ENCODE measurements at regions of chr7 and their contacts with region 1.

Region 1: GRCh38 chr7:149147072-149147751 is at the start of gene ZNF398:
- DNase-seq: peak; percentile 74
- H3K4me3 Mint-ChIP-seq: peak within 1 kb of the TSS; percentile 89
- H3K27ac Mint-ChIP-seq: peak within 1 kb of the TSS; percentile 91
- H3K4me1 Mint-ChIP-seq: peaks cover 42% of the 10 kb centered on the region
- H3K27me3 Mint-ChIP-seq: no peaks in the 10 kb centered on the region
- total RNA-seq, gene ZNF398: 14.1 and 14.4 TPM in 2 replicates

Region 2: DNA sequence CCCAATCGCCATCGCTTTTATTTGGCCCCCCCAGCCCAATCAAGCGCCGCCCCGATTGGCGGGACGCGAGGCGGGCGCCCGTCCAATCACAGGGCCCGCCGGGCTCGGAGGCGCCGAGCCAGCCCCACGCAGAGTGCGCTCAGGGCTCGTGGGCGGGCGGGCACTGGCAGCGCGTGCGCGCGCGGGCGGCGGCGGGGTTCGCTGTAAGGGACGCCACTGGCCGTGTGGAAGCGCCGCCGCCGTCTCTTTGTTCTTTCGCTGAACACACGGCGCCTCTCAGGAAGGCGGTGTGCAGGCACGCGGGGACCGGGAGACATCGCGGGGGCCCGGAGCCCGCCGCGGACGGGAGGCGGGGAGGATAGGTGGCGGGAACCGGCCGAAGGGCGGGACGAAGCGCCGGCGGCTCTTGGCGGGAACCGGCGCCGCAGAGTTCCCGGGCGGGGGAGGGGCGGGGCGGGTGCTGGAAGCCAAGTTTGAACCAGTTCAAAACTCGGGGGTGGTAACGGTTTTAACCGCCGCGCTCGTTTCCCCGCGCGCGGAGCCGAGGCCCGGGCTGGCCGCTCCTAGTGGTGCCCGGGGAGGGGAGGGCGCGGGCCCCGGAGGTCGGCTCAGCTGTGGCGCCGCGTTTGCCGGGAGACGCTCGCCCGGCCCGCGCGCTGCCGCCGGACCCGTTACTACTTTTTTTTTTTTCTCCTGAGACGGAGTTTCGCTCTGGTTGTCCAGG is 262.8 kb before region 1 on chr7:
- intact Hi-C with region 1: loop called (anchors 5 kb)
- DNase-seq: peak; percentile 95
- H3K4me3 Mint-ChIP-seq: peak overlapping the region; percentile 93
- H3K27ac Mint-ChIP-seq: peak overlapping the region; percentile 98
- H3K4me1 Mint-ChIP-seq: peaks cover 43% of the 10 kb centered on the region
- H3K27me3 Mint-ChIP-seq: no peaks in the 10 kb centered on the region

Region 3: DNA sequence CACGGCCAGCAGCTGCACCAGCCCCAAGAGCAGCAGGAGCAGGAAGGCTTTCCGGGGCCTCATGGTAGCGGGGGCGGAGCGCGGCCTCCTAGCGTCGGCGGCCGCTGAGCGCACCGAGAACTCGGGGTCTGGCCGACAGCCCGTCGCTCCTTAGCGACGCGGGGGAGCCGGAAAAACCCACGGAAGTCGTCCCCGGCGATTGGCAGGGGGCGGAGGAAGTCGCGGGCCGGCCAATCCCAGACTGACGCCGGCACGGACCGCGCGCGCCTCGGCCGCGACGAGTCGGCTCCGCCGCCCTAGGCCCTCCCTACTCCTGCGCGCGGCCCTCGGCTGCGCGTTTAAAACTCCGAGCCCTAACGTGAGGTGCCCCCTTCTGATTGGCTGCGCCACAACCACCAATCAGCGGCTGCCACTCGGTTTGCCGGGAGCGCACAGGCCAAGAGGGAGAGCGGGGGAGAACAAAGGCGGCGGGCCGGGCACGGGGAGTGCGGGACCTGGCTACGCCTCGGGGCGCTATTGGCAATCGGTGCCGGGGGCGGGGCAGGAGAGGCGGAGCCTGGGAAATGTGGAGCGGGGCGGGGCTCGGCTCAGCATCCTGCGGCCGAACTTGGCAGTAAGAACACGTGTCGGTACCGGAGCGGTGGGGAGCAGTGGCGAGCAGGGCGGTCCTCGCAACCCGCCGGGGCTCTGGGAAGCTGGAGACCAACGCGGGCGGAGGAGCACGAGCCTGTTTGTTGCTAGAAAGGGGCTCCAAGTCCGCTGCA is 118.7 kb before region 1 on chr7 and contains the start of gene PDIA4:
- intact Hi-C with region 1: loop called (anchors 1 kb)
- DNase-seq: peak; percentile 100
- H3K4me3 Mint-ChIP-seq: peak within 1 kb of the TSS; percentile 98
- H3K27ac Mint-ChIP-seq: peak within 1 kb of the TSS; percentile 93
- H3K4me1 Mint-ChIP-seq: peaks cover 34% of the 10 kb centered on the region
- H3K27me3 Mint-ChIP-seq: peaks cover 2% of the 10 kb centered on the region
- total RNA-seq, gene PDIA4: 132 and 142 TPM in 2 replicates

Region 4: DNA sequence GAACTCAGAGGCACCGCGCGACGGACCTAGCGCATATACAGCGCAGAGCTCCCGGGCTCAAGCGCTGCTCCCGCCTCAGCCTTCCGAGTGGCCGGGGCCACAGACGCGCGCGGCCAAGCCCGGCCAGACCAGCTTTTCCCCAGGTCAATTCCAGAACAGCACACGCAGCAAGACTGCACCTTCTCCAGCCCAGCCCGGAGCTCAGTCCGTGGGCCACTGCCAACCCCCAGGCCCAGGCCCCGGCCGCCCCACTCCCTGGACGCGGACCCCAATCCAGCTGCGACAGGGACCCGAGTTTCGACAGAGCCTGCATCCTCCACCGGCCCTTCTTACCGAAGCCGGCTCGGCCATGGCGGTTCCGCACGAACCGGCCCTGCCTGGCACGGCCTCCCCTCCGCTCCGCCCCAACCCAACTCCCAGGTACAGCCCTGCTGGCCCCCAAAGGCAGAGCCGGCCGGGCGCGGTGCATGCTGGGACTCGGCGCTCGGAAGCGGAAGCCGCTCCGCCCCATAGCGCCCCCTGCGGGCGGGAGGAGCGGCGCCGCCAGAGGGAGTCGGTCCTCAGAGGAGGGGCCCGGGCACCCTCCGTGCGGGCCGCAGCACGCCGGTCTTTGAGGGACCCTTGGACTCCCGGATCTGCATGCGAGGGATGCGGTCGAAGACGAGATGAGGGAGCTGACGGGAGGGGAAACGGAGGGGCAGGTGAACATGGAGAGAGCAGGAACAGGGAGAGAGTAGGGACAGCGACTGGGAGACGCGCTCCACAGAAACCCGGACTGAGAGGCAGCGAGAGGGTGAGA is 21.1 kb before region 1 on chr7 and contains the start of gene ZNF425:
- intact Hi-C with region 1: loop called (anchors 1 kb)
- DNase-seq: peak; percentile 93
- H3K4me3 Mint-ChIP-seq: peak within 1 kb of the TSS; percentile 100
- H3K27ac Mint-ChIP-seq: peak within 1 kb of the TSS; percentile 100
- H3K4me1 Mint-ChIP-seq: peaks cover 28% of the 10 kb centered on the region
- H3K27me3 Mint-ChIP-seq: no peaks in the 10 kb centered on the region
- total RNA-seq, gene ZNF425: 1.1 and 1.2 TPM in 2 replicates

Region 5: GRCh38 chr7:149261829-149262617 is 114.8 kb after region 1 on chr7 and contains the start of gene ZNF783:
- intact Hi-C with region 1: loop called (anchors 2 kb)
- DNase-seq: peak; percentile 81
- H3K4me3 Mint-ChIP-seq: peak within 1 kb of the TSS; percentile 88
- H3K27ac Mint-ChIP-seq: peak within 1 kb of the TSS; percentile 95
- H3K4me1 Mint-ChIP-seq: peaks cover 29% of the 10 kb centered on the region
- H3K27me3 Mint-ChIP-seq: no peaks in the 10 kb centered on the region
- total RNA-seq, gene ZNF783: 24.1 and 25.6 TPM in 2 replicates

Region 6: GRCh38 chr7:149497456-149498261 is 350.4 kb after region 1 on chr7 and contains the start of gene ZNF746:
- intact Hi-C with region 1: loop called (anchors 5 kb)
- DNase-seq: peak; percentile 78
- H3K4me3 Mint-ChIP-seq: peak within 1 kb of the TSS; percentile 99
- H3K27ac Mint-ChIP-seq: peak within 1 kb of the TSS; percentile 96
- H3K4me1 Mint-ChIP-seq: peaks cover 43% of the 10 kb centered on the region
- H3K27me3 Mint-ChIP-seq: no peaks in the 10 kb centered on the region
- total RNA-seq, gene ZNF746: 27.7 and 28.1 TPM in 2 replicates

Measured in activated T-helper 1 cell treated with anti-CD3 and anti-CD28 coated beads, Interleukin-12 subunit alpha, Interleukin-12 subunit beta, Interleukin-2, Interleukin-4 antibody, amounts not matched to agents 30 ng/mL and 10 ng/mL and 1 ng/mL, durations not matched to agents 14 hours and 24 hours and 36 hours (primary cell).